ENCODE measurements at regions of chr2 and their contacts with region 1.

Region 1: GRCh38 chr2:8004250-8004681 is 677.6 kb upstream of the ID2 start:
- DNase-seq: no peak

Region 2: GRCh38 chr2:8148260-8149008 is 144.2 kb after region 1 on chr2:
- intact Hi-C with region 1: loop called (anchors 10 kb)
- DNase-seq: no peak

Region 3: GRCh38 chr2:8438476-8438875 is 434.2 kb after region 1 on chr2:
- intact Hi-C with region 1: loop called (anchors 10 kb)
- DNase-seq: no peak

Measured in cardiac septum (tissue), 1 donor.